A673 (cell line): ENCODE measurements at regions of chr11 and their contacts with region 1.

Region 1: GRCh38 chr11:63132985-63133775 is 10.8 kb downstream of the SLC22A24 start:
- DNase-seq: no peak
- H3K4me3 ChIP-seq: no peak overlapping the region
- H3K27ac ChIP-seq: no peak overlapping the region
- H3K4me1 ChIP-seq: no peaks in the 10 kb centered on the region
- H3K27me3 ChIP-seq: no peaks in the 10 kb centered on the region
- CTCF ChIP-seq: no peak

Region 2: GRCh38 chr11:63099555-63099954 is 33.6 kb before region 1 on chr11:
- CTCF ChIA-PET with region 1: no interaction called
- POLR2A ChIA-PET with region 1: no interaction called
- intact Hi-C with region 1: no loop called
- DNase-seq: no peak
- H3K4me3 ChIP-seq: no peak overlapping the region
- H3K27ac ChIP-seq: no peak overlapping the region
- H3K4me1 ChIP-seq: no peaks in the 10 kb centered on the region
- H3K27me3 ChIP-seq: no peaks in the 10 kb centered on the region
- CTCF ChIP-seq: no peak

Region 3: GRCh38 chr11:63212742-63213141 is 79.6 kb after region 1 on chr11:
- CTCF ChIA-PET with region 1: no interaction called
- POLR2A ChIA-PET with region 1: no interaction called
- intact Hi-C with region 1: loop called (anchors 2 kb)
- DNase-seq: peak; percentile 66
- H3K4me3 ChIP-seq: no peak overlapping the region
- H3K27ac ChIP-seq: no peak overlapping the region
- H3K4me1 ChIP-seq: no peaks in the 10 kb centered on the region
- H3K27me3 ChIP-seq: no peaks in the 10 kb centered on the region
- CTCF ChIP-seq: peak; percentile 76